HEK293 (cell line): ENCODE measurements at regions of chr5 and their contacts with region 1.

Region 1: GRCh38 chr5:119267958-119268386 is 87.8 kb upstream of the TNFAIP8 start:
- H3K4me3 ChIP-seq: peak overlapping the region; percentile 60
- H3K27ac ChIP-seq: peak overlapping the region; percentile 88; the same call in 1 of the 2 replicates
- H3K4me1 ChIP-seq: peaks cover 25% of the 10 kb centered on the region
- CTCF ChIP-seq: no peak

Region 2: GRCh38 chr5:118987988-118988865 is 279.7 kb before region 1 on chr5 and contains the start of gene DTWD2:
- CTCF ChIA-PET with region 1: interaction called, 4 read pairs
- POLR2A ChIA-PET with region 1: interaction called, 10 read pairs
- H3K4me3 ChIP-seq: peak within 1 kb of the TSS; percentile 93
- H3K27ac ChIP-seq: peak within 1 kb of the TSS; percentile 91
- H3K4me1 ChIP-seq: peaks cover 2% of the 10 kb centered on the region; the same call in 1 of the 2 replicates
- CTCF ChIP-seq: peak; percentile 97

Region 3: DNA sequence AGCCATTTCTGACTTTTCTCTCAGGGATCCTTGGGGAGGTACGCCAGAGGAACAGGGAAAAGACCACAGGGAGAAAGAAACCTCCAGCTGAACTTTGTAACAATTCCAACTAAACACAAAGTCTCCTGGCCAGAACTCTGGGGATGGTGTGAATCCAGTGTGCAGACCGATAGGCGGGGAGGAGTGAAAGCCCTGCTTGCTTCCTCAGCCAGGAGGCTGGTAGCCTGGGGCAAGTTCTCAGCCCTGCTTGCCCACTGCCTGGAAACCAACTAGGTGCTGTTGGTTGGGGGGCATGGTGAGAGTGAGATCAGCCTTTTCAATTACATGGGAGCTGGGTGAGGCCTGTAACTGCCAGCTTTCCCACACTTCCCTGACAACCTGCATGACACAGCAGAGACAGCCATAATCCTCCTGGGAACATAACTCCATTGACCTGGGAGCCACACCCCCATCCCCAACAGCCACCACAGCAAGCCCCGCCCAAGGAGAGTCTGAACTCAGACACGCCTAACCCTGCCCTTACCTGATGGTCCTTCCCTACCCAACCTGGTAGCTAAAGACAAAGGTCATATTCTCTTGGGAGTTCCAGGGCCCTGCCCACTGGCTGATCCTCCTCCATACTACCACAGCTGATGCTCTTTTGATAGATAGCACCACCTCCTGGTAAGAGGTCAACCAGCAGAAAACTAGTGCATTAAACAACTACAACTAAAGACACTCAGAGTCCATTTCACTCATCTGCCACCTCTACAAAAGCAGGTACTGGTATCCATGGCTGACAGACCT is 12.2 kb before region 1 on chr5:
- CTCF ChIA-PET with region 1: interaction called, 4 read pairs
- POLR2A ChIA-PET with region 1: interaction called, 10 read pairs
- H3K4me3 ChIP-seq: no peak overlapping the region
- H3K27ac ChIP-seq: no peak overlapping the region
- H3K4me1 ChIP-seq: no peaks in the 10 kb centered on the region
- CTCF ChIP-seq: 0 out of 2 replicates have a peak, but pooled peaks have one; percentile 11

Region 4: DNA sequence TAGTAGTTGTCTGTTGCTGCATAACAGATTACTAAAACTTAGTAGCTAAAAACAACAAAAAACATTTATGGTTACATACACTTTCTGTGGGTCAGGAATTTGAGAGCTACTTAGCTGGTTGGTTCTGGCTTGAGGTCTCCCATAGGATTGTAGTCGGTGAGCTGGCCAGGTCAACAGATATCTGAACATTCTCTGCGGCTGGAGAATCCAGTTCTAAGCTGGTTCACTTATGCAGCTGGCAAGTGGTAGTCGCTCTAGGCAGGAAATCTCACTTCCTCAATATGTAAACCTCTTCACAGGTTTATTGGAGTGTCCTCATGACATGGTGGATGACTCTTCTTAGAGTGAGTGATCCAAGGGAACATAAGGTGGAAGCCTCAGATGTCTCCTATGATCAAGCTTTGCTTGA is 22.2 kb after region 1 on chr5:
- CTCF ChIA-PET with region 1: interaction called, 3 read pairs
- POLR2A ChIA-PET with region 1: interaction called, 32 read pairs
- H3K4me3 ChIP-seq: no peak overlapping the region
- H3K27ac ChIP-seq: no peak overlapping the region
- H3K4me1 ChIP-seq: peaks cover 18% of the 10 kb centered on the region
- CTCF ChIP-seq: no peak

Region 5: DNA sequence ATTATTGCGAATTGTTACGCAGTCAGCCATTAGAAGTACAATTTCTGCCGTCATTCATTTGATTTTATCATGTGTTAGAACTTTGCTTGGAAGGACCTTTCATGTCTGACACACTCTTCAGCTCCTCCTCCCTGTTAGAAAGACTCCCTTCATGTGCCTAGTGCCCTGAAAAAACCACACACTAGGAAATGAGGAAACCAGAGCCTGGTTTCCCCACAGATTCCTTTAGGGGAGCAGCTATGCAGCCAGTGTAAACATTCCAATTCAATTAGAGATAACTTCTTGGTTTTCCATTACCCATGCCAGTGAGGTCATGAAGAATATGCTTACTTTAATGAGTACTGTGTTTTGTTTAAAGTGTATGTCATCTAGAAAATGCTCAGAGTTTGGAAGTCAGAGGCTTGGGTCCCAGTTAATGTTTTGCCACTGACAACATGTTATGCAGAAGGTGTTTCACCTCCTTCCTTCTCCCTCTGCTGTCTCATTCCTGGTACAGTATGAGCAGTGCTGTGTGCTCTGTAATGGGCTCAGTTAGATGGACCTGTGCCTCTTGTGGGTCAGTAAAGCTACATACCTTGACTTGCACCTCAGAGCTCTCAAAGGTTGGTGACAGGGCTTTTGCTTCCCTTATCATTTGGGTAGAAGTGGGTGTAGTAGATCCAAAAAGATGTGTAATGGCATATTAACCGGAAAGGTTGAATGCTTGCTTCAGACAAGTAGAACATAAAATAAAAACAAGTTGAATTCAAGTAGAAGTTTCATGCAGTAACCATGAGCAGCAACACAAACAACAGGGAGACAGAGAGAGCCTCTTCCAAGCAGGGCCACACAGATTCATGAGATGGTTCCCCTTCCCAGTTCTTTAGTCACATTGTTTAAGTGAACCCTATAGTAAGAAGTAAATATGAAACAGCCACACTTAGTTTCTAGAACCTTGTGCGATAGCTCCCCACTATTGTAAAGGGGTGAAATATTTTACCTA is 35.2 kb after region 1 on chr5:
- CTCF ChIA-PET with region 1: interaction called, 5 read pairs
- POLR2A ChIA-PET with region 1: interaction called, 12 read pairs
- H3K4me3 ChIP-seq: no peak overlapping the region
- H3K27ac ChIP-seq: peak overlapping the region; percentile 40
- H3K4me1 ChIP-seq: peaks cover 30% of the 10 kb centered on the region
- CTCF ChIP-seq: peak; percentile 50; the same call in 1 of the 2 replicates

Region 6: GRCh38 chr5:119322948-119323537 is 55.1 kb after region 1 on chr5:
- CTCF ChIA-PET with region 1: no interaction called
- POLR2A ChIA-PET with region 1: interaction called, 12 read pairs
- H3K4me3 ChIP-seq: no peak overlapping the region
- H3K27ac ChIP-seq: peak overlapping the region; percentile 96
- H3K4me1 ChIP-seq: peaks cover 12% of the 10 kb centered on the region
- CTCF ChIP-seq: no peak